T-cell (primary cell): ENCODE measurements at regions of chr9 and their contacts with region 1.

Region 1: GRCh38 chr9:130107234-130107861 is 53.6 kb downstream of the GPR107 start:
- DNase-seq: peak; percentile 56 to 93 (median 82)
- ATAC-seq: peak; percentile 78 to 92 (median 90)
- H3K4me3 ChIP-seq: no peak overlapping the region
- H3K4me3 Mint-ChIP-seq: no peak overlapping the region
- H3K27ac ChIP-seq: no peak overlapping the region
- H3K27ac Mint-ChIP-seq: peak overlapping the region; percentile 48 to 74
- H3K4me1 ChIP-seq: peaks cover 0 to 17% of the 10 kb centered on the region in 2 experiments
- H3K4me1 Mint-ChIP-seq: peaks cover 15 to 22% (median 18%) of the 10 kb centered on the region in 3 donors
- H3K27me3 ChIP-seq: no peaks in the 10 kb centered on the region
- H3K27me3 Mint-ChIP-seq: no peaks in the 10 kb centered on the region

Region 2: GRCh38 chr9:130072515-130073229 is 34.7 kb before region 1 on chr9:
- CTCF ChIA-PET with region 1: no interaction called
- POLR2A ChIA-PET with region 1: no interaction called
- DNase-seq: no peak
- ATAC-seq: no peak
- H3K4me3 ChIP-seq: no peak overlapping the region
- H3K4me3 Mint-ChIP-seq: no peak overlapping the region
- H3K27ac ChIP-seq: no peak overlapping the region
- H3K27ac Mint-ChIP-seq: no peak overlapping the region
- H3K4me1 ChIP-seq: peaks cover 4 to 8% of the 10 kb centered on the region in 2 experiments
- H3K4me1 Mint-ChIP-seq: peaks cover 16 to 37% (median 31%) of the 10 kb centered on the region in 3 donors
- H3K27me3 ChIP-seq: no peaks in the 10 kb centered on the region
- H3K27me3 Mint-ChIP-seq: no peaks in the 10 kb centered on the region

Region 3: GRCh38 chr9:130128733-130129431 is 21.5 kb after region 1 on chr9:
- CTCF ChIA-PET with region 1: interaction called in 1 of 2 experiments, 13 read pairs
- POLR2A ChIA-PET with region 1: no interaction called
- DNase-seq: peak in 34 of 35 experiments; percentile 17 to 82 (median 44)
- ATAC-seq: peak; percentile 41 to 65 (median 47)
- H3K4me3 ChIP-seq: peak overlapping the region; percentile 19 to 27
- H3K4me3 Mint-ChIP-seq: peak overlapping the region; percentile 64 to 88 (median 78)
- H3K27ac ChIP-seq: peak overlapping the region; percentile 98
- H3K27ac Mint-ChIP-seq: peak overlapping the region; percentile 92 to 98
- H3K4me1 ChIP-seq: peaks cover 46 to 62% of the 10 kb centered on the region in 2 experiments
- H3K4me1 Mint-ChIP-seq: peaks cover 56 to 62% (median 59%) of the 10 kb centered on the region in 3 donors
- H3K27me3 ChIP-seq: no peaks in the 10 kb centered on the region
- H3K27me3 Mint-ChIP-seq: no peaks in the 10 kb centered on the region

Region 4: GRCh38 chr9:130235897-130236668 is 128.7 kb after region 1 on chr9:
- CTCF ChIA-PET with region 1: interaction called, 10 to 17 read pairs
- POLR2A ChIA-PET with region 1: no interaction called
- DNase-seq: peak in 34 of 35 experiments; percentile 23 to 79 (median 59)
- ATAC-seq: peak; percentile 34 to 58 (median 44)
- H3K4me3 ChIP-seq: no peak overlapping the region
- H3K4me3 Mint-ChIP-seq: peak overlapping the region in 2 of 3 donors; percentile 41 to 43
- H3K27ac ChIP-seq: no peak overlapping the region
- H3K27ac Mint-ChIP-seq: no peak overlapping the region
- H3K4me1 ChIP-seq: peaks cover 0 to 28% of the 10 kb centered on the region in 2 experiments
- H3K4me1 Mint-ChIP-seq: peaks cover 11 to 22% (median 20%) of the 10 kb centered on the region in 3 donors
- H3K27me3 ChIP-seq: peaks cover 0 to 14% of the 10 kb centered on the region in 2 experiments
- H3K27me3 Mint-ChIP-seq: no peaks in the 10 kb centered on the region